Activated CD4-positive, alpha-beta T cell treated with anti-CD3 and anti-CD28 coated beads for 36 hours (primary cell): ENCODE measurements at regions of chr10 and their contacts with region 1.

Region 1: GRCh38 chr10:11578802-11579255 is 32.6 kb downstream of the USP6NL start:
- DNase-seq: peak; percentile 77
- ATAC-seq: peak; percentile 74
- H3K4me3 Mint-ChIP-seq: no peak overlapping the region
- H3K27ac Mint-ChIP-seq: peak overlapping the region; percentile 21
- H3K4me1 Mint-ChIP-seq: peaks cover 46% of the 10 kb centered on the region
- H3K27me3 Mint-ChIP-seq: peaks cover 5% of the 10 kb centered on the region

Region 2: GRCh38 chr10:10385846-10386245 is 1193.0 kb before region 1 on chr10:
- CTCF ChIA-PET with region 1: no interaction called
- POLR2A ChIA-PET with region 1: no interaction called
- intact Hi-C with region 1: no loop called
- DNase-seq: no peak
- ATAC-seq: no peak
- H3K4me3 Mint-ChIP-seq: no peak overlapping the region
- H3K27ac Mint-ChIP-seq: no peak overlapping the region
- H3K4me1 Mint-ChIP-seq: no peaks in the 10 kb centered on the region
- H3K27me3 Mint-ChIP-seq: peaks cover 13% of the 10 kb centered on the region

Region 3: DNA sequence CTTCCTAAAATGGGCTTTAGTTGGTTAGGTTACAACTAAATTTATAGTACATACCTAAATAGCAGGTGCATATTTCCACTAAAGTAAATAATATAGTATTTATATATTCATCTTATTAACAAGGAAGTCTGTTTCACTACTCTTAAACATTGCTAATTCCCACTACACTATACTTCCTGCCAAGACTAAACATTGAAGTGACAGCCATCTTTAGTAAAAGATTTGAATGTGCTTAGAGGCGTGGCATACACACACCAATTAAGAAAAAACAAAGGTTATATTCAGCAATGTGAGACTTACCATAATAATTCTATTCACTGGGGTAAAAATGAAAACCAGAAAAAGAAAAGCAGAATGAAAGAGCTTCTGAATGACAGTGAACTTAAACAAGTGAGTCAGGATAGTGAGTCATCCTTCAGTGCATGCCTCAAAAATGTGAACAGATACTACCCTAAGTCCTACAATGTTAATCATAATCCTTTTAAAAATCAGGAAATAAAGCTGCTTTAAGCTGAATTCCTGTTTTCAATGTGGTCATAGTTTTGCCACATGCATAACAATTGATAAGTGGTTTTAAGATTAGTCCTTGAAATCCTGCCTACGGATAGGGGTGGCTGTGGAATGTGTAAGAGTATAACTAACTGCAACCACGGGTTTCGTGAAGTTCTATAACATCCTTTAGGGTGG is 26.8 kb before region 1 on chr10:
- CTCF ChIA-PET with region 1: interaction called, 4 read pairs
- POLR2A ChIA-PET with region 1: interaction called, 3 read pairs
- intact Hi-C with region 1: loop called (anchors 1 to 2 kb)
- DNase-seq: no peak
- ATAC-seq: peak; percentile 90
- H3K4me3 Mint-ChIP-seq: no peak overlapping the region
- H3K27ac Mint-ChIP-seq: peak overlapping the region; percentile 72
- H3K4me1 Mint-ChIP-seq: peaks cover 38% of the 10 kb centered on the region
- H3K27me3 Mint-ChIP-seq: no peaks in the 10 kb centered on the region

Region 4: GRCh38 chr10:11631890-11632587 is 53.2 kb after region 1 on chr10:
- CTCF ChIA-PET with region 1: no interaction called
- POLR2A ChIA-PET with region 1: no interaction called
- intact Hi-C with region 1: loop called in 1 of 2 experiments (anchors 2 kb)
- DNase-seq: peak; percentile 63
- ATAC-seq: peak; percentile 99
- H3K4me3 Mint-ChIP-seq: no peak overlapping the region
- H3K27ac Mint-ChIP-seq: no peak overlapping the region
- H3K4me1 Mint-ChIP-seq: peaks cover 14% of the 10 kb centered on the region
- H3K27me3 Mint-ChIP-seq: peaks cover 5% of the 10 kb centered on the region